ENCODE measurements at regions of chr9 and their contacts with region 1.

Region 1: DNA sequence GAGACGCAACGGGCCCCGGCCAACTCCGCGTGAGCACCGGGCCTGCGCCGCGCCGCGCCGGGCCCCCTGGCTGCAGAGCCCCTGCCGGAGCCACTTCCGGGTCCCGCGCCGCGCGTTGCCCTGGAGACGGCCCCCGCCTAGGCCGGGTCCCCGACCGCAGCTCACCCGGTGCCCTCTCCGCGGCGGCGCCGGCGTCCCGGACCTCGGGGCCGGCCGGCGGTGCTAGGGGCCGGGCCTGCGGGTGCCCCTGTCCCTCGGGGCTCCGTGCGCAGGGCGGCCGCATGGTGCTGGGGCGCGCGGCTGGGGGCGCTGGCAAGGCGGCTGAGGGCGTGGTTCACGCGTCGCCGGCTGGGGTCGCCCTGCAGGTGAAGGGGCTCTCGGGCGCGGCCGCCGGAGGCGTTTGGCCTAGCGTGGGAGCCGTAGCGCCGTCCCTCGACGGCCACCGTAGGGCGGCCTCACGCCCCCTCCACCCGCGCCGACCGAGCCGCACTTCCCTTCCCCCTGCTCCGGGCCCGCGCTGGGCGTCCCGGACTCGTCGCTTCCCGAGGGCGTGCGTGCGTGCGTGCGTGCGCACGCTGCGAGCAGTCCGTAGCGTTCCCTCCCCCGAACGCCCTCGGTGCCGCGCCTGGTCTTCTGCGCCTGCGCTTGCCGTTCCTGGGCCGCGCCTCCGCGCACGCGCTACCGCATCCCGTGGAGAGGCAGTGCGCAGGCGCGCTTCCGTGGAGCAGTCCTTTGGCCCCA is at the start of gene TMEM250:
- DNase-seq: peak; percentile 99
- ATAC-seq: peak; percentile 93
- total RNA-seq, gene TMEM250: 18.7 TPM

Region 2: GRCh38 chr9:135701959-135702721 is 416.4 kb before region 1 on chr9 and contains the start of gene KCNT1:
- intact Hi-C with region 1: loop called (anchors 2 kb)
- DNase-seq: no peak
- ATAC-seq: peak; percentile 55
- total RNA-seq, gene KCNT1: 2.6 TPM

Region 3: DNA sequence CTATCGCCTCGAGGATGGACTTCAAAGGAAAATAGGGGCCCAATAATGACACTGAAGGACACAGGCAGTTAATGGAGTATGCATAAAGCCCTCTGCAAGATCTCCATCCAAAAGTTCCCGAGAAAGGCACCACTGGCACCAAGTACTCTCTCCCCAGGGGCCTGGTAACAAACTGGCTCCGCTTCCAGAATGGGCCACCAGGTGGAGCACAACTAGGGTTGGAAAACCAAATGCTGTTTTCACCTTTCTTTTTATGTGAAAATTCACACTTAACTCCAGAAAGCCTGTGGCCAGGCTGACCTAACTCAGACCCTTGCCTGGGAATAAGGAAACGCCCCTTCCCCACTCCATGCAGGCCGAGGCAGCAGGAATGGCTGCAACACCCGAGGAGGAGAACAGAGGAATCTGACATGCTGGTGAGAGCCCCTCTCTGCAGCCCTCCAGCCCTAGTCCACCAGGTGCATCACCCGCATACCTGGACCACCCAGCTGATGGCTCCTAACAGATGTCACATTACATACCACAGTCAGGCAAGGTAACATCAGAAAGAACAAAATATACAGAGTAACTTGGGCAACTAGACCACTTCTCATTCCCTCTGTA is 253.9 kb before region 1 on chr9:
- intact Hi-C with region 1: loop called (anchors 5 kb)
- DNase-seq: no peak
- ATAC-seq: peak; percentile 31

Region 4: DNA sequence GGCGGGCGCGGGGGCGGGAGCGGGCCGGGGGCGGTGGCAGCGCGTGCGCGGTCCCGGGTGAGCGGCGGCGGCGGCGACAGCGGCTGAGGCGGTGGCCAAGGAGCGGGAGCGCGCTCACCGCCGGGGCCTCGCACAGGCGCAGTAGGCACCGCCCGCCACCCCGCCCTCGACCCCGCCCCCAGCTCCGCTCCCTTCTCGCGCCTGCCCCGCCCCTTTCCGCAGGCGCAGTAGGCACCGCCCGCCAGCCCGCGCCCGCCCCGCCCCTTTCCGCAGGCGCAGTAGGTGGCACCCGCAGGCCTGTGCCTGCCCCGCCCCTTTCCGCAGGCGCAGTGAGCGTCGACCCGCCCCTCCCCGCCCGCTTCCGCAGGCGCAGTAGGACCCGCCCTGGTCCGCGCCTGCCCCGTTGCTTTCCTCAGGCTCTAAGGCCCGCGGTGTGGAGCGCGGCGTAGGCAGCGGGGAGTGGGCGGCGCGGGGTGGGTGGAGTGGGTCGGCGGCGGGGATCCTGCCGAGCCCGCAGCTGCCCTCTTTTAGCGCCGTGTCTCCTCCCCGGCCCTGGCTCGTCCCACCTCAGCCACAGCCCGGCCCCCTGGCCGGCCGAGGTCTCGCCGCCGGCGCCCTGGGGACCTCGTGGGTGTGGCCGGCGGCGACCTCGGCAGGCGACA is 210.9 kb before region 1 on chr9 and contains the start of gene CAMSAP1:
- intact Hi-C with region 1: no loop called
- DNase-seq: peak; percentile 96
- ATAC-seq: peak; percentile 98
- total RNA-seq, gene CAMSAP1: 17.6 TPM

Region 5: DNA sequence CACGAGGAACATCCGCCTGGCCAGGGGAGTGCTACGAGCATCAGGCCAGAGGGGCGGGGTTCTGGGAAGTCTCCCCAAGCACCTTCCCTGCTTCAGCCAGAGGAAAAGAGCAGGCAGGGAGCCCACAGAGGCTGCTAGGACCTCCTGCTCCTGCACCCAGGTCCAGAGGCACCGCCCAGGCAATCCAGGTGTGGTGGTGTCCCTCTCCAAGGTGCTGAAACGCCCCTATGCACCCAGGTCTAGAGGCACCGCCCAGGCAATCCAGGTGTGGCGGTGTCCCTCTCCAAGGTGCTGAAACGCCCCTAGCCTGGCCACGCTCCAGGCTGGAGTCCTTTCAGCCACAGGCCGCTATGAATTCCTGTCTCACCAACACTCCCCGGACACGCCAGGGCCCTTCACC is 146.6 kb before region 1 on chr9:
- intact Hi-C with region 1: loop called (anchors 1 kb)
- DNase-seq: no peak
- ATAC-seq: no peak

Region 6: GRCh38 chr9:136085815-136086212 is 32.7 kb before region 1 on chr9:
- intact Hi-C with region 1: loop called (anchors 2 kb)
- DNase-seq: peak; percentile 81
- ATAC-seq: peak; percentile 85